Posterior cingulate gyrus (tissue), 11 donors: ENCODE measurements at regions of chr4 and their contacts with region 1.

Region 1: GRCh38 chr4:163484906-163485305 is 9.6 kb upstream of the TMA16 start:
- DNase-seq: peak in 4 of 10 donors; percentile 23 to 56 (median 44)

Region 2: DNA sequence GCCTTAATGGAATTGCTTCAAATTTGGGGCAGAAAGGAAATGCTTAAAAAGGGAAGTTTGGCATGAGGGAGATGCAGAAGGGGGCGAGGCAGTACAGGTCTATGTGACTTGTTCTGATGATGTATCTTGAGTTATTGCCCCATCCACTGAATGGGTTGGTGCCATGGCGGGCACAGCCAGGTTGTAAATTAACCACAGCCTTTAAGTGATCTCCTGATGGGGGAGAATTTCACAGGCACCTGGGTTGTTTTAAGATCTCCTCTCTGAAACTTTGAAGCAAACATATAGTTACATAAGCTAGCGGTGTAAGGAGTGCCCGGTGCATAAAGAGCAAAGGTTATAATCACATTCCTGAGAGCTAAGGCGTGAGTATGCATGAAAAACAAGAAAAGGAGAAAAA is 104.2 kb before region 1 on chr4:
- intact Hi-C with region 1: no loop called
- DNase-seq: no peak

Region 3: DNA sequence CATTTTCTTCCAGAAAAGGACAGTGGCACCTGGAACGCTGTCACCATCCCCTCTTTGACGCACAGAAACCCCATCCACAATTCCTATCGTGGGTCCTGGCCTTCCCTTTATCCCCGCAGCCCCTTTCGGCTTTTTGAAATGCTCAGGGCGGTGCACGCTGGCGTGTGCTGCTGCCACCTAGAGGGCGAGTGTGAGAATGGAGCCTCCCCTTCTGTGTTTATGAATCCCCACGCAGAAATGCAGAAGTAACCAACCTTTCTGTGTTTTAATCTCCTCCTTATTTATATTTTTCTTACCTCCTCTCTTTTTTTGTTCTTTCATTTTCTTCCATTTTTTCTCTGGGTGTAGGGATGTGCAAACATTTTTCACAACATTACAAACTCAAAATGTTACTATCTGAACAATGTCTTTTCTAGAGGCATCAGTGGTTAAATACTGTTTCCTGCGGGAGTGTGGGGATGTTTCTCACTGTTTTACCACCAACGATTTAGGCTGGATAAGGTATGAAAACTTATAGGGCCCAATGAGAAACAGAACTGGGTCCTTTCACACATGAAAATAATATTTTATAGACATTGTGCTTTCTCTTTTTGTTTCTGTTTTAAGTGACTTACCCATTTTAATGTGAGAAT is 59.6 kb after region 1 on chr4:
- intact Hi-C with region 1: loop called (anchors 1 kb)
- DNase-seq: peak; percentile 14 to 93 (median 60)

Region 4: GRCh38 chr4:163755013-163755412 is 270.1 kb after region 1 on chr4:
- intact Hi-C with region 1: loop called (anchors 10 kb)
- DNase-seq: no peak

Region 5: GRCh38 chr4:164748375-164748774 is 1263.5 kb after region 1 on chr4:
- intact Hi-C with region 1: loop called (anchors 10 kb)
- DNase-seq: no peak